MCF 10A (cell line): ENCODE measurements at regions of chr3 and their contacts with region 1.

Region 1: GRCh38 chr3:48088749-48089466 is 72.7 kb upstream of the MAP4 start:
- DNase-seq: peak; percentile 97
- H3K4me3 Mint-ChIP-seq: peak overlapping the region; percentile 96
- H3K27ac Mint-ChIP-seq: peak overlapping the region; percentile 98
- H3K4me1 Mint-ChIP-seq: peaks cover 28% of the 10 kb centered on the region
- H3K27me3 Mint-ChIP-seq: no peaks in the 10 kb centered on the region
- CTCF ChIP-seq: no peak

Region 2: DNA sequence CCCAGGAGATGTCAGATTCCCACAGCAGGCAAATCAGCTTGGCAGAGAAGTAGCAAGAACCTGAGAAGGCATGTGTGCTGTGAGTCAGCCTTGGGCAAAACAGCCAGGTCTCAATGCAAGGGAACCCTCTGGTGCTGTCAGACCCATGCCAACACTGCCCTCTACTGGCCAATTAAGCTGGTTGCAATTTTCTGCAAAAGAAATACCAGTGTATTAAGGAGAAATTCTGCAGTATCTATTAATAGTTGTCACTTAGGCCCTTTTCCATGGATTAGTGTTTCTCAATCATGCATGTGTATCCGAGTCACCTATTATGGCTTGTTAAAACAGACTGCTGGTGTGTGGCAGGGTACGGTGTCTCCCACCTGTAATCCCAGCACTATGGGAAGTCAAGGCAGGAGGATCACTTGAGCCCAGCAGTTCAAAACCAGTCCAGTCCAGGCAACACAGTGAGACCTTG is 98.9 kb before region 1 on chr3:
- CTCF ChIA-PET with region 1: interaction called, 3 read pairs
- POLR2A ChIA-PET with region 1: interaction called, 5 read pairs
- intact Hi-C with region 1: loop called (anchors 5 kb)
- DNase-seq: peak; percentile 95
- H3K4me3 Mint-ChIP-seq: no peak overlapping the region
- H3K27ac Mint-ChIP-seq: peak overlapping the region; percentile 69
- H3K4me1 Mint-ChIP-seq: peaks cover 18% of the 10 kb centered on the region
- H3K27me3 Mint-ChIP-seq: no peaks in the 10 kb centered on the region
- CTCF ChIP-seq: peak; percentile 82

Region 3: GRCh38 chr3:48013288-48013980 is 75.5 kb before region 1 on chr3:
- CTCF ChIA-PET with region 1: no interaction called
- POLR2A ChIA-PET with region 1: interaction called, 14 read pairs
- intact Hi-C with region 1: loop called (anchors 10 kb)
- DNase-seq: peak; percentile 61
- H3K4me3 Mint-ChIP-seq: no peak overlapping the region
- H3K27ac Mint-ChIP-seq: peak overlapping the region; percentile 63
- H3K4me1 Mint-ChIP-seq: peaks cover 35% of the 10 kb centered on the region
- H3K27me3 Mint-ChIP-seq: no peaks in the 10 kb centered on the region
- CTCF ChIP-seq: no peak

Region 4: DNA sequence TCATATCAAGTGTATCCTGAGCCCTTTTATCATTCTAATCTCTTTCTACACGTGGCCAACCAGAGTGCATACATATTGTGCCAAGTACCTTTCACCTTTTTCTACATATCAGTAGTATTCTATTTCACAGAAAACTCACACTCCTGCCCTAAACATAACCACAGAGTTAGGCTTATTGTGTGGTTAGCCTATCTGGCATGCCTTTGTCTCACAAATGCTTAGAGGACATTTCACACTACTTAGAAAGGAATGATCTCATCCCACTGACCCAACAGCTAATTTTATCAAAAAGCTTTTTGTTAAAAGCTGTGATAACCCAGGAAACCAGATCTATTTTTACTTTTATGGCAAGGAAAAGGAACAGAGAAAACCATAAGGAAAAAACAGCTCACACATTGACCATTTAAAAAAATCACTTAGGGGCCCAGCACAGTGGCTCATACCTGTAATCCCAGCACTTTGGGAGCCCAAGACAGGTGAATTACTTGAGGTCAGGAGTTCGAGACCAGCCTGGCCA is 54.9 kb before region 1 on chr3:
- CTCF ChIA-PET with region 1: no interaction called
- POLR2A ChIA-PET with region 1: interaction called, 10 read pairs
- intact Hi-C with region 1: no loop called
- DNase-seq: no peak
- H3K4me3 Mint-ChIP-seq: no peak overlapping the region
- H3K27ac Mint-ChIP-seq: peak overlapping the region; percentile 49
- H3K4me1 Mint-ChIP-seq: peaks cover 22% of the 10 kb centered on the region
- H3K27me3 Mint-ChIP-seq: no peaks in the 10 kb centered on the region
- CTCF ChIP-seq: no peak

Region 5: DNA sequence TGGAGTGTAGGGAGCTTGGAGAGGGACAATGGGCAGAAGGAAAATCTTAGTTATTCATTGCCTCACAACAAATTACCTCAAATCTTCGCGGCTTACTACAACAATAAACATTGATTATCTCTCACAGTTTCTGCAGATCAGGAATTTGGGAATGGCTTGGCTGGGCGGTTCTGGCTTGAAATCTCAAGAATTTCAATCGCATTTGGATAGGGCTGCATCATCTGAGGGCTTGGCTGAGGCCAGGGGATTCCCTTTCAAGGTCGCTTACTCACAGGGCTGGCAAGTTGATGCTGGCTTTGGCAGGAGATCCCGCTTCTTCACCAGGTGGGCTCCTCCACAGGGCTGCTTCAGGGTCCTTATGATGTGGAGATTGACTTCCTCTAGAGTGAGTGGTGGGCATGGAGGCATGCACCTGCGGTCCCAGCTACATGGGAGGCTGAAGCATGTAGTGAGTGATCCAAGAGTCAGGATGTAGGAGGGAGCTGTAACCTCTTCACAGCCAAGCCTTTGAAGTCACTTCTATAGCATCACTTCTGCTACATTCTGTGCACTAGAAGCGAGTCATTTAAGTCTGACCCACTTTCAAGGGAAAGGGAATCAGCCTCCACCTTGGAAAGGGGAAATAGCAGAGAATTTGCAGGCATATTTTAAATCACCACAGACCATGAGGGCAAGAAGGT is 36.3 kb after region 1 on chr3:
- CTCF ChIA-PET with region 1: no interaction called
- POLR2A ChIA-PET with region 1: interaction called, 31 read pairs
- intact Hi-C with region 1: no loop called
- DNase-seq: peak; percentile 49
- H3K4me3 Mint-ChIP-seq: no peak overlapping the region
- H3K27ac Mint-ChIP-seq: no peak overlapping the region
- H3K4me1 Mint-ChIP-seq: peaks cover 6% of the 10 kb centered on the region
- H3K27me3 Mint-ChIP-seq: no peaks in the 10 kb centered on the region
- CTCF ChIP-seq: no peak

Region 6: GRCh38 chr3:48142316-48142870 is 53.5 kb after region 1 on chr3:
- CTCF ChIA-PET with region 1: interaction called, 5 read pairs
- POLR2A ChIA-PET with region 1: interaction called, 41 read pairs
- intact Hi-C with region 1: no loop called
- DNase-seq: peak; percentile 56
- H3K4me3 Mint-ChIP-seq: peak overlapping the region; percentile 21
- H3K27ac Mint-ChIP-seq: peak overlapping the region; percentile 57
- H3K4me1 Mint-ChIP-seq: peaks cover 15% of the 10 kb centered on the region
- H3K27me3 Mint-ChIP-seq: no peaks in the 10 kb centered on the region
- CTCF ChIP-seq: no peak

Region 7: DNA sequence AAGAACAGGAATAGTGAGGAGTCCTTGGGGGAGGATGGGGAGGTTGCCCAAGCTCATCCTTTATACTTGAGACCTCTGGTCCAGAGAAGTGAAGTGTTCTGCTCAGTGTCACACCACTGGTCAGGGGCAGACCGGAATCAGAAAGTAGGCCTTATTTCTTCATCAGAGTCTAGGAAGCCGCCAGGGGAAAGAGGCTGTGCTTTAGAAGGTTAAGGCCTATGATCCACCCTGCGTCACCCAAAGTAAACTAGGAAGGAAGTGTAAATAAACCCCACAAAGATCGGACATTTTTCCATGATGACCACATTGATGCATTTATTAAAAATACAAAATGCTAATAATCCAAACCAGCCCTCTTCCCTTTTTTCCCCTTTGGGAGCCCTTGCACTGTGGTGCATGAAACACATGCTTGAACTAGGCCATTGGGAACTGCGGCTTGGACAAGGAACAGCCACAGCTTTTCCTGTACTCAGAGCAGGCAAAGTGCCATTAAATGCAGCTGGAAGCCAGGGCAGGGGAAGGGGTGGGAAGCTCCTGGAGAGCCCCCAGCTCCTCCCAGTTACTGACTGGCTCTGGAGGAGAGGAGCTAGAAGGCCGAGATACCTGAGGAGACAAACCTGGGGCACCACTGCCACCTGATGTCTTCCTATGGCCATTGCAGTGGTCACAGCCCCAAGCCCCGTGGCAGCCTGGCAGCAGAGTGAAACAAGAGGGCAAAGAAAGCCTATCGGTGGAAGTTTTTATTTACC is 62.3 kb after region 1 on chr3:
- CTCF ChIA-PET with region 1: interaction called, 18 read pairs
- POLR2A ChIA-PET with region 1: interaction called, 22 read pairs
- intact Hi-C with region 1: loop called (anchors 1 kb)
- DNase-seq: peak; percentile 88
- H3K4me3 Mint-ChIP-seq: no peak overlapping the region
- H3K27ac Mint-ChIP-seq: no peak overlapping the region
- H3K4me1 Mint-ChIP-seq: peaks cover 23% of the 10 kb centered on the region
- H3K27me3 Mint-ChIP-seq: no peaks in the 10 kb centered on the region
- CTCF ChIP-seq: peak; percentile 92

Region 8: GRCh38 chr3:48685602-48686511 is 596.9 kb after region 1 on chr3 and contains the start of gene NCKIPSD:
- CTCF ChIA-PET with region 1: no interaction called
- POLR2A ChIA-PET with region 1: no interaction called
- intact Hi-C with region 1: no loop called
- DNase-seq: peak; percentile 85
- H3K4me3 Mint-ChIP-seq: peak within 1 kb of the TSS; percentile 73
- H3K27ac Mint-ChIP-seq: peak within 1 kb of the TSS; percentile 85
- H3K4me1 Mint-ChIP-seq: peaks cover 31% of the 10 kb centered on the region
- H3K27me3 Mint-ChIP-seq: no peaks in the 10 kb centered on the region
- CTCF ChIP-seq: peak; percentile 63
- total RNA-seq, gene NCKIPSD: 23.8 and 26.9 TPM in 2 replicates